K562 (cell line): ENCODE measurements at regions of chr6 and their contacts with region 1.

Region 1: DNA sequence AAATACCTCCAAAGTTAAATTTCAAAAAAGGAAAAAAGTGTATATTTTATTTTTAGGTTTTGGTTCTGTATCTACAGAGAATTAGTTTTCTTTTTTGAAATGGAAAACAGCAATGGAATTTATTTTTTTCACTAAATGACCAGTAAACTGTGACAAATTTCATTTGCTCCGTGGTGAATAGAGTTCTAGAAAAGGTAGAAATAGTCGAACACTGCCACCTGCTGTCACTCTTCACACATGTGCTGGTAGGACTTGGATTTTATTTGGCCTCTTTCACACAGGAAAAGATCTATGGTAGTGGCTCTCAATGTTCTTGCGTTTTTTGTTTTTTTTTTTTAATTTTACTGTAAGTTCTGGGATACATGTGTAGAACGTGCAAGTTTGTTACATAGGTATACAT is 312.5 kb downstream of the EYA4 start:
- DNase-seq: peak; percentile 15 to 59 (median 26)
- ATAC-seq: peak; percentile 92
- H3K4me3 ChIP-seq: no peak overlapping the region
- H3K27ac ChIP-seq: no peak overlapping the region
- H3K4me1 ChIP-seq: no peaks in the 10 kb centered on the region
- H3K27me3 ChIP-seq: no peaks in the 10 kb centered on the region
- CTCF ChIP-seq: peak; percentile 51 to 72 (median 53); a peak in 4 of 6 replicates
- EP300 ChIP-seq: no peak
- POLR2A ChIP-seq: no peak
- RAD21 ChIP-seq: peak; percentile 74 to 76

Region 2: GRCh38 chr6:132820629-132821381 is 732.8 kb before region 1 on chr6:
- CTCF ChIA-PET with region 1: no interaction called
- POLR2A ChIA-PET with region 1: no interaction called
- in situ Hi-C with region 1: loop called (anchors 10 kb)
- intact Hi-C with region 1: no loop called
- DNase-seq: peak in 2 of 4 experiments; percentile 40 to 59
- ATAC-seq: peak; percentile 21
- H3K4me3 ChIP-seq: no peak overlapping the region
- H3K27ac ChIP-seq: peak overlapping the region; percentile 5; the same call in 1 of the 3 replicates
- H3K4me1 ChIP-seq: peaks cover 0 to 24% of the 10 kb centered on the region in 2 experiments; a peak in 2 of 5 replicates
- H3K27me3 ChIP-seq: no peaks in the 10 kb centered on the region
- CTCF ChIP-seq: no peak
- EP300 ChIP-seq: no peak
- POLR2A ChIP-seq: peak; percentile 67
- RAD21 ChIP-seq: no peak

Region 3: GRCh38 chr6:132937466-132937906 is 616.2 kb before region 1 on chr6:
- CTCF ChIA-PET with region 1: interaction called, 4 read pairs
- POLR2A ChIA-PET with region 1: interaction called, 3 read pairs
- in situ Hi-C with region 1: no loop called
- intact Hi-C with region 1: loop called (anchors 10 kb)
- DNase-seq: peak; percentile 14 to 54 (median 16)
- ATAC-seq: peak; percentile 79
- H3K4me3 ChIP-seq: no peak overlapping the region
- H3K27ac ChIP-seq: no peak overlapping the region
- H3K4me1 ChIP-seq: no peaks in the 10 kb centered on the region
- H3K27me3 ChIP-seq: peaks cover 4 to 6% of the 10 kb centered on the region in 2 experiments; a peak in 2 of 5 replicates
- CTCF ChIP-seq: peak; percentile 59 to 65 (median 60)
- EP300 ChIP-seq: no peak
- POLR2A ChIP-seq: no peak
- RAD21 ChIP-seq: peak; percentile 40 to 57; a peak in 3 of 4 replicates

Region 4: GRCh38 chr6:132962936-132963868 is 590.5 kb before region 1 on chr6:
- CTCF ChIA-PET with region 1: interaction called, 9 read pairs
- POLR2A ChIA-PET with region 1: no interaction called
- in situ Hi-C with region 1: loop called (anchors 5 kb)
- intact Hi-C with region 1: loop called (anchors 1 kb)
- DNase-seq: peak; percentile 58 to 77 (median 63)
- ATAC-seq: peak; percentile 95
- H3K4me3 ChIP-seq: no peak overlapping the region
- H3K27ac ChIP-seq: no peak overlapping the region
- H3K4me1 ChIP-seq: peaks cover 0 to 17% of the 10 kb centered on the region in 2 experiments; a peak in 3 of 5 replicates
- H3K27me3 ChIP-seq: no peaks in the 10 kb centered on the region
- CTCF ChIP-seq: peak; percentile 77 to 84 (median 80)
- EP300 ChIP-seq: no peak
- POLR2A ChIP-seq: no peak
- RAD21 ChIP-seq: peak; percentile 79 to 83

Region 5: GRCh38 chr6:133170600-133170999 is 383.1 kb before region 1 on chr6:
- CTCF ChIA-PET with region 1: no interaction called
- POLR2A ChIA-PET with region 1: no interaction called
- in situ Hi-C with region 1: no loop called
- intact Hi-C with region 1: no loop called
- DNase-seq: no peak
- ATAC-seq: no peak
- H3K4me3 ChIP-seq: no peak overlapping the region
- H3K27ac ChIP-seq: no peak overlapping the region
- H3K4me1 ChIP-seq: no peaks in the 10 kb centered on the region
- H3K27me3 ChIP-seq: no peaks in the 10 kb centered on the region
- CTCF ChIP-seq: no peak
- EP300 ChIP-seq: no peak
- POLR2A ChIP-seq: no peak
- RAD21 ChIP-seq: no peak

Region 6: DNA sequence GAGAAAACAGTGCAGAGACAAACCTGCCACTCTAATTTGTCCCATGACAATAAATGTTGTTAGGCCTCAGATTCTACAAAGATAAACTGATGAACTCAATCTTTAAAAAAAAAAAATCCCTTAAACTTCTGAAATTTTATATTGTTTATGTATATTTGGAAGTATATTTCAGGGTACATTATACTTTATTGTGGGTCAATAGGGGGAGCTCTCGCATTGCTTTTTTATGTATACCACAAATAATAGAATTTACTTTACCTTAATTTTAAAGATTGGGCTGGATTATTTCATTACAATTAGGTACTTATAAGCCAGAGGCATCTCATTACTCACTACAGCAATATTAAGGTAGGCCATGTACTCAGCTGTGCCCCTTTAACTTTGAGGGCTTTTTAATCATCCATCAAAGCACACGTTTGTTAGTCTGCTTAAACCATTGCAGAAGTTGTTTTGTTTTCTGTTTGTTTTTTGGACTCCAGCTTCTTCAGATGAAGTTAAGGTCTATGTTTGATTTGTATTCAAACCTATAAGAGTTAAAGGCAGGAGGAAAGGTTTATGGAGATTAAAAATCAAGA is 368.8 kb before region 1 on chr6:
- CTCF ChIA-PET with region 1: no interaction called
- POLR2A ChIA-PET with region 1: no interaction called
- in situ Hi-C with region 1: no loop called
- intact Hi-C with region 1: loop called (anchors 2 kb)
- DNase-seq: peak in 1 of 4 experiments; percentile 16
- ATAC-seq: no peak
- H3K4me3 ChIP-seq: no peak overlapping the region
- H3K27ac ChIP-seq: no peak overlapping the region
- H3K4me1 ChIP-seq: no peaks in the 10 kb centered on the region
- H3K27me3 ChIP-seq: no peaks in the 10 kb centered on the region
- CTCF ChIP-seq: peak in 1 of 3 experiments; percentile 40; a peak in 2 of 6 replicates
- EP300 ChIP-seq: no peak
- POLR2A ChIP-seq: no peak
- RAD21 ChIP-seq: peak; percentile 17 to 48; a peak in 3 of 4 replicates